ENCODE measurements at regions of chr12 and their contacts with region 1.

Region 1: GRCh38 chr12:12890815-12891645 is at the start of gene GPRC5A:
- DNase-seq: peak; percentile 99
- H3K4me3 ChIP-seq: peak within 1 kb of the TSS; percentile 52 to 61 (median 54)
- H3K27ac ChIP-seq: peak within 1 kb of the TSS; percentile 92
- H3K4me1 ChIP-seq: peaks cover 36% of the 10 kb centered on the region
- H3K27me3 ChIP-seq: no peaks in the 10 kb centered on the region
- CTCF ChIP-seq: peak in 1 of 2 donors; percentile 54
- total RNA-seq, gene GPRC5A: 6.0 to 15.3 TPM

Region 2: GRCh38 chr12:12813120-12814101 is 77.6 kb before region 1 on chr12 and contains the start of gene DDX47:
- CTCF ChIA-PET with region 1: no interaction called
- dilution Hi-C with region 1: no loop called
- in situ Hi-C with region 1: no loop called
- intact Hi-C with region 1: loop called (anchors 2 kb)
- DNase-seq: peak; percentile 86
- H3K4me3 ChIP-seq: peak within 1 kb of the TSS; percentile 60 to 86 (median 71)
- H3K27ac ChIP-seq: peak within 1 kb of the TSS; percentile 93
- H3K4me1 ChIP-seq: peaks cover 21% of the 10 kb centered on the region
- H3K27me3 ChIP-seq: no peaks in the 10 kb centered on the region
- CTCF ChIP-seq: peak; percentile 93 to 96
- total RNA-seq, gene DDX47: 62.1 to 70.3 TPM

Region 3: DNA sequence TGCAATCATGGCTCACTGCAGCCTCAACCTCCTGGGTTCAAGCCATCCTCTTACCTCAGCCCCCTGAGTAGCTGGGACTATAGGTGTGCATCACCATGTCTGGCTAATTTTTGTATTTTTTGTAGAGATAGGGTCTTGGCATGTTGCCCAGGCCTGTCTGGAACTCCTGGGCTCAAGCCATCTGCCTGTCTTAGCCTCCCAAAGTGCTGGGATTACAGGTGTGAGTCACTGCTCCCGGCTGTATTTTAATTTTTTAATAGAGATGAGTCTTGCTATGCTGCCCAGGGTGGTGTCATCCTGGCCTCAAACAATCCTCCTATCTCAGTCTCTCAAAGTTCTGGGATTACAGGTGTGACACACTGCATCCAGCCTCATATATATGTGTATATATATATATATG is 31.3 kb before region 1 on chr12:
- CTCF ChIA-PET with region 1: interaction called, 12 read pairs
- dilution Hi-C with region 1: no loop called
- in situ Hi-C with region 1: no loop called
- intact Hi-C with region 1: no loop called
- DNase-seq: peak; percentile 48
- H3K4me3 ChIP-seq: no peak overlapping the region
- H3K27ac ChIP-seq: no peak overlapping the region
- H3K4me1 ChIP-seq: no peaks in the 10 kb centered on the region
- H3K27me3 ChIP-seq: no peaks in the 10 kb centered on the region
- CTCF ChIP-seq: no peak

Region 4: GRCh38 chr12:12872139-12872881 is 18.7 kb before region 1 on chr12:
- CTCF ChIA-PET with region 1: no interaction called
- dilution Hi-C with region 1: no loop called
- in situ Hi-C with region 1: no loop called
- intact Hi-C with region 1: loop called (anchors 2 kb)
- DNase-seq: peak; percentile 98
- H3K4me3 ChIP-seq: peak overlapping the region in 1 of 3 experiments; percentile 3
- H3K27ac ChIP-seq: peak overlapping the region; percentile 89
- H3K4me1 ChIP-seq: peaks cover 39% of the 10 kb centered on the region
- H3K27me3 ChIP-seq: no peaks in the 10 kb centered on the region
- CTCF ChIP-seq: no peak

Region 5: DNA sequence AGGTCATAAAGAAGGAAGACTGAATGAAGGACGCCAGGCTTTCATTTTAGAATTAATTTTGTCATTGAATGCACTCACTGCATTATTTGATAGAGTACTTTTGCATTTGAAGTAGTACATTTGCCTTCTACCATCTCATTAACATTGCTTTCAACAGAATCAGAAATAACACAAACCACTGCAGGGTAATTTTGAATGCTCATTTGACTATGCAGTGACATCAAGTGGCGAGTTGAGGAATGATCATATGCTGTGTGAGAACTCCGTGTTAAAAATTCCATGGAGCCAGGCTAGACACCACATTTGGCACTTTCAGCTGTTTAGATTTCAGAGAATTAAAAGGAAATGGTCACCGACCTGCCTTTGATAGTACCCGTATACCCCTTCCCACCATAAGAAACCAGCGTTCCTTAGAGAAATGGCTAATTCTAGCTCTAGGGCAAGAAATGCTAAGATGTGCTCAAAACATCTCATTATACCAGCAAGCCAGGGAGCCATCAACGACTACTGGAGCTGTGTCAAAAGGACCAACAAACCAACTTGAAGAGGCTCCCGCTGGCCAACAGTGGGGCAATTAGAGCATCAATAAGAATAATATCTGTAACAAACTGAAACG is 92.5 kb after region 1 on chr12:
- CTCF ChIA-PET with region 1: no interaction called
- dilution Hi-C with region 1: no loop called
- in situ Hi-C with region 1: no loop called
- intact Hi-C with region 1: loop called (anchors 1 kb)
- DNase-seq: peak; percentile 37
- H3K4me3 ChIP-seq: no peak overlapping the region
- H3K27ac ChIP-seq: no peak overlapping the region
- H3K4me1 ChIP-seq: no peaks in the 10 kb centered on the region
- H3K27me3 ChIP-seq: no peaks in the 10 kb centered on the region
- CTCF ChIP-seq: peak; percentile 55 to 75

Measured in mammary epithelial cell (primary cell).